Heart right ventricle (tissue), 16 donors: ENCODE measurements at regions of chr4 and their contacts with region 1.

Region 1: DNA sequence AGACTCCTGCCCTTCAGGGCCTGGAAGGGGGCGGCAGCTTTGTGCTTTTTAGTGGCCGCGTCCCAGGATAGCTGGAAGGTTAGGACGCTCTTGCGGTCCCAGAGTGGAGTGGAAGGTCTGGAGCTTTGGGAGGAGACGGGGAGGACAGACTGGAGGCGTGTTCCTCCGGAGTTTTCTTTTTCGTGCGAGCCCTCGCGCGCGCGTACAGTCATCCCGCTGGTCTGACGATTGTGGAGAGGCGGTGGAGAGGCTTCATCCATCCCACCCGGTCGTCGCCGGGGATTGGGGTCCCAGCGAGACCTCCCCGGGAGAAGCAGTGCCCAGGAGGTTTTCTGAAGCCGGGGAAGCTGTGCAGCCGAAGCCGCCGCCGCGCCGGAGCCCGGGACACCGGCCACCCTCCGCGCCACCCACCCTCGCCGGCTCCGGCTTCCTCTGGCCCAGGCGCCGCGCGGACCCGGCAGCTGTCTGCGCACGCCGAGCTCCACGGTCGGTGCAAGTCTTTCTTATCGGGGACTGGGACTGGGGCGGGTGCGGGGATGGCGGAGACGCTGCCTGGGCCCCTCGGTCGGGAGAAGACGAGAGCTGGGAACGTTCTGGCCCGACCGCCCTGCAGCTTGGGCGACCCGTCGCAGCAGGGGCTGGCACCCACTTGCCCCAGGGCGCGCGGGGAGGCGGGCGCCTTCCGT is at the start of gene EDNRA:
- DNase-seq: peak; percentile 39 to 68
- ATAC-seq: peak; percentile 72 to 86 (median 80)
- H3K4me3 ChIP-seq: peak within 1 kb of the TSS; percentile 48 to 74 (median 60)
- H3K27ac ChIP-seq: peak within 1 kb of the TSS; percentile 72 to 92 (median 82)
- H3K4me1 ChIP-seq: peaks cover 0 to 41% (median 6%) of the 10 kb centered on the region in 9 donors
- H3K27me3 ChIP-seq: peaks cover 0 to 43% (median 5%) of the 10 kb centered on the region in 7 donors
- CTCF ChIP-seq: no peak
- total RNA-seq, gene EDNRA: 5.0 to 27.4 (median 11.7) TPM

Region 2: DNA sequence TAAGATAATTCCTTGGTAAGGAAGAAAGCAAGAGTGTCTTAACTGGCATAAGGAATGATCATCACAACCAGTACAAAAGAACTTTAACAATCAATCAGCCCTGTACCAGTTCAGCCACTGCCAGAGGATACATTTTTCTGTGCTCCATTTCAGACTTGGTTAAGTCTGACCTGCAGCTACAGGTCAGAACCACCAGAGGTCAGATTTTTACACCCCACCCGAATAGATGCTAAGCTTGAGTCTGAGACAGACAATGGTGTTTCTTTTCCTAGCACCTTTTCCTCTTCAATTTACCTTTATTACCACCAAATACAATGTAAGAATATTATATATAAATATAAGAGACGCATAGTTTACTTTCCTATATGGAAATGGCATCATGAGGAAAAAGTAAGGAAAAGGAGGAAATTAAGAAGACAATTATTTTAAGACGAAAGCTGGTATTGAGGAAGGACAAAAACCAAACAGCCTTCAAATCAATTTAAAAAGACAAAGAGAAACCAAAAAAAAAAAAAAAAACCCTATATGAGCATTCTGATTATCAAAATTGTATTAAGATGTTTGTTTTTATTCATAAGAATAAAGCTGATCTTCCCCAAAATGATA is 320.0 kb before region 1 on chr4:
- intact Hi-C with region 1: loop called in 1 of 10 experiments (anchors 10 kb)
- DNase-seq: peak in 1 of 2 donors; percentile 20
- ATAC-seq: peak in 6 of 8 donors; percentile 34 to 68 (median 60)
- H3K4me3 ChIP-seq: no peak overlapping the region
- H3K27ac ChIP-seq: no peak overlapping the region
- H3K4me1 ChIP-seq: peaks cover 0 to 18% (median 0%) of the 10 kb centered on the region in 9 donors
- H3K27me3 ChIP-seq: peaks cover 0 to 14% (median 0%) of the 10 kb centered on the region in 7 donors
- CTCF ChIP-seq: peak; percentile 56 to 84 (median 77)

Region 3: DNA sequence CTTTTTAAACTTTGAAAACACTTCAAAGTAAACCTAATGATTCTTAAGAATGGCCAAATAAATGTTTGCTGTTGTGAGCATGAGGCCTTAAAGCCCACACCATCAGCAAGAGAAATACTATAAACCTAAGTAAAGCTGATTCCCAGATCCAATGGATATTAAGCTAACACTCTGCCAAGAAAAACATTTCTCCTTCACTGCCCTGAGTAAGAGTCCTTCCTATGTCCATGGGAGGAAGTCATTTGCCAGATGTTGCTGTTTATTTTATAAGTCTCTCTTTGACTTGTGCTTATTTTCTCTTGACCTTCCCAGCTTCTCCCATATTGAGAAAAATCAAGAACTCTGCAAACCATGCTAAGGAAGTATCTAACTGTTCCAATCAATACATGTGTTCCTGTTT is 154.4 kb before region 1 on chr4:
- intact Hi-C with region 1: loop called in 1 of 10 experiments (anchors 5 kb)
- DNase-seq: no peak
- ATAC-seq: peak in 6 of 8 donors; percentile 39 to 82 (median 58)
- H3K4me3 ChIP-seq: no peak overlapping the region
- H3K27ac ChIP-seq: peak overlapping the region in 6 of 10 donors; percentile 24 to 65 (median 55)
- H3K4me1 ChIP-seq: peaks cover 0 to 28% (median 15%) of the 10 kb centered on the region in 9 donors
- H3K27me3 ChIP-seq: no peaks in the 10 kb centered on the region
- CTCF ChIP-seq: no peak

Region 4: DNA sequence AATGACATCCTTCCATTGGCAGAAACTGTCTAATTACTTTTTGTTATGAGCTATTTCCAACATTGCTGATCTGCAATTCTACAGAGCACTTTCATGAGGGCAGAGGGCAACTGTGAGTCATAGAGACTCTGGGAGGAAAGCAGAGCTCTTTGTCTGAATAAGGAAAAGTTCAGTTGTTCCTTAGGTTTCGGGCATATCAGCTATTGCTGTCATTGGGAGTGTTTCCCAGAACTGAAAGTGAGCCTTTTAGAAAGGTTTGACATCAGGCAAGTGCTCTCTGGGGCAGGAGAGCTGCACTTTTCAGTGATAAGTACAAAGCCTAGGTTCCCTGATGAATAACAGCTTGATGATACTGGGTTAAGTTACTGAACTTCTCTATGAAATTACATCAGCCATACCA is 119.3 kb before region 1 on chr4:
- intact Hi-C with region 1: loop called in 1 of 10 experiments (anchors 10 kb)
- DNase-seq: peak in 1 of 2 donors; percentile 41
- ATAC-seq: peak in 7 of 8 donors; percentile 71 to 85 (median 78)
- H3K4me3 ChIP-seq: no peak overlapping the region
- H3K27ac ChIP-seq: peak overlapping the region; percentile 5 to 90 (median 74)
- H3K4me1 ChIP-seq: peaks cover 0 to 36% (median 12%) of the 10 kb centered on the region in 9 donors
- H3K27me3 ChIP-seq: no peaks in the 10 kb centered on the region
- CTCF ChIP-seq: no peak

Region 5: GRCh38 chr4:147518846-147519767 is 38.1 kb after region 1 on chr4:
- intact Hi-C with region 1: loop called in 1 of 10 experiments (anchors 5 kb)
- DNase-seq: peak in 1 of 2 donors; percentile 29
- ATAC-seq: peak in 1 of 8 donors; percentile 46
- H3K4me3 ChIP-seq: no peak overlapping the region
- H3K27ac ChIP-seq: no peak overlapping the region
- H3K4me1 ChIP-seq: peaks cover 0 to 30% (median 0%) of the 10 kb centered on the region in 9 donors
- H3K27me3 ChIP-seq: no peaks in the 10 kb centered on the region
- CTCF ChIP-seq: peak; percentile 40 to 80 (median 69)